Endothelial cell of umbilical vein (primary cell): ENCODE measurements at regions of chr6 and their contacts with region 1.

Region 1: GRCh38 chr6:154301839-154302752 is 54.5 kb downstream of the IPCEF1 start:
- DNase-seq: no peak
- H3K4me3 ChIP-seq: no peak overlapping the region
- H3K27ac ChIP-seq: no peak overlapping the region
- H3K4me1 ChIP-seq: peaks cover 13% of the 10 kb centered on the region
- H3K27me3 ChIP-seq: no peaks in the 10 kb centered on the region
- CTCF ChIP-seq: no peak
- POLR2A ChIP-seq: no peak

Region 2: GRCh38 chr6:154316131-154316530 is 14.0 kb after region 1 on chr6:
- CTCF ChIA-PET with region 1: no interaction called
- POLR2A ChIA-PET with region 1: no interaction called
- dilution Hi-C with region 1: no loop called
- intact Hi-C with region 1: loop called (anchors 2 kb)
- DNase-seq: no peak
- H3K4me3 ChIP-seq: no peak overlapping the region
- H3K27ac ChIP-seq: no peak overlapping the region
- H3K4me1 ChIP-seq: no peaks in the 10 kb centered on the region
- H3K27me3 ChIP-seq: no peaks in the 10 kb centered on the region
- CTCF ChIP-seq: no peak
- POLR2A ChIP-seq: no peak

Region 3: GRCh38 chr6:154353626-154354025 is 51.5 kb after region 1 on chr6:
- CTCF ChIA-PET with region 1: no interaction called
- POLR2A ChIA-PET with region 1: no interaction called
- dilution Hi-C with region 1: no loop called
- intact Hi-C with region 1: loop called (anchors 2 kb)
- DNase-seq: no peak
- H3K4me3 ChIP-seq: no peak overlapping the region
- H3K27ac ChIP-seq: no peak overlapping the region
- H3K4me1 ChIP-seq: no peaks in the 10 kb centered on the region
- H3K27me3 ChIP-seq: no peaks in the 10 kb centered on the region
- CTCF ChIP-seq: no peak
- POLR2A ChIP-seq: no peak